ENCODE measurements at regions of chr6 and their contacts with region 1.

Region 1: GRCh38 chr6:158686791-158687381 is 37.0 kb downstream of the SYTL3 start:
- DNase-seq: no peak
- ATAC-seq: no peak
- H3K4me3 ChIP-seq: no peak overlapping the region
- H3K27ac ChIP-seq: peak overlapping the region; percentile 22; the same call in 1 of the 2 replicates
- H3K4me1 ChIP-seq: peaks cover 29% of the 10 kb centered on the region
- H3K27me3 ChIP-seq: no peaks in the 10 kb centered on the region
- CTCF ChIP-seq: no peak

Region 2: GRCh38 chr6:158213925-158214674 is 472.8 kb before region 1 on chr6:
- CTCF ChIA-PET with region 1: interaction called, 11 read pairs
- POLR2A ChIA-PET with region 1: no interaction called
- intact Hi-C with region 1: loop called (anchors 1 kb)
- DNase-seq: peak; percentile 76
- ATAC-seq: peak; percentile 99
- H3K4me3 ChIP-seq: no peak overlapping the region
- H3K27ac ChIP-seq: no peak overlapping the region
- H3K4me1 ChIP-seq: peaks cover 14% of the 10 kb centered on the region
- H3K27me3 ChIP-seq: no peaks in the 10 kb centered on the region
- CTCF ChIP-seq: peak; percentile 84

Region 3: DNA sequence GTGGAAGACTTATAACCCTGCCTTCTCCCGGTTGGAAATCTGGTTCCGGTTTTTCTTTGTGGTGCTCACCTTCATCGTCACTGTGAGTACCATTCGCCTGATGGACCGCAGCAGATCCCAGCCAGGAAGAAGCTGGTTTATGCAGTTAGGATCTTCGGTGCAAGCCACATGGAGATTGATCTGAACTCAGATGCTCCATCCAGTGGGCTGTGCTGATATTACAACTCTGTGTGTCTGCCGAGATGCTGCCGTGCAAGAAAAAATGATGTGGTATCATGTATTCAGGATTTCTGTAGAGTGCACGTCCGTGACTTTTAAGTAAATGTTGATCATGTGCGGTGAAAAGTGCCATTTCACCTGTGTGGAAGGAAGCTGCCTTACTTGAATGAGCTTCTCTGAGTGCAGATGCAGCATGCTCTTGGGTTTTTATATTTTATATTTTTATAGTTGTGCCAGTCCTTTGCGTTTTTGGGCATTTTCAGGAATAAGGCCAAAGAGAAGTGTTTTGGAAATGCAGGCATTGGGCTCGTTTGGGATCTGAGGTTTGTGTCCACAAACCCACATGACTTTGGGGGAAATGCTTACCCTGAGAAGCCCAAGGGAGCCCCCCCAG is 81.5 kb before region 1 on chr6:
- CTCF ChIA-PET with region 1: interaction called, 13 read pairs
- POLR2A ChIA-PET with region 1: no interaction called
- intact Hi-C with region 1: no loop called
- DNase-seq: peak; percentile 70
- ATAC-seq: peak; percentile 67
- H3K4me3 ChIP-seq: no peak overlapping the region
- H3K27ac ChIP-seq: no peak overlapping the region
- H3K4me1 ChIP-seq: no peaks in the 10 kb centered on the region
- H3K27me3 ChIP-seq: no peaks in the 10 kb centered on the region
- CTCF ChIP-seq: peak; percentile 71

Region 4: DNA sequence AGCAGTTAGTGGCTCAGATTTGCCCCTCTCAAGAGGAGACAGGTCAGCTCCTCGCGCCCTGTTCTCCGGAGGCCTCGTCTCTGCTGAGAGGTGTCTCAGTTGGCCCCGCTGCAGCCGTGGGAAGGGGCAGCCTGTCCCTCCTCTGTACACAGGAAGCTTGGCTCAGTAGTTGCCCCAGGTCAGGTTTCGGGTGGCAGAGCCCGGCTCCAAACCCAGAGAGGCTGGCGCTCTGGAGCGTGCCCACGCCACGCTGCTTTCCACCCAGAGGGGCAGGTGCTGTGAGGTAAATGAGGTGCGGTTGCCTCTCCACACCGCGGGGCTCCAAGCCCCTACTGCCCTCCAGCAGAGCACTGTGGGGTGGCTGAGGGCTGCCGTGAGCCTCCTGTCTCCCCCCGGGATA is 58.3 kb before region 1 on chr6:
- CTCF ChIA-PET with region 1: interaction called, 10 read pairs
- POLR2A ChIA-PET with region 1: no interaction called
- intact Hi-C with region 1: no loop called
- DNase-seq: no peak
- ATAC-seq: no peak
- H3K4me3 ChIP-seq: no peak overlapping the region
- H3K27ac ChIP-seq: no peak overlapping the region
- H3K4me1 ChIP-seq: peaks cover 10% of the 10 kb centered on the region; the same call in 1 of the 2 replicates
- H3K27me3 ChIP-seq: no peaks in the 10 kb centered on the region
- CTCF ChIP-seq: no peak

Region 5: GRCh38 chr6:158644231-158645063 is 42.4 kb before region 1 on chr6 and contains the start of gene DYNLT1:
- CTCF ChIA-PET with region 1: no interaction called
- POLR2A ChIA-PET with region 1: interaction called, 3 read pairs
- intact Hi-C with region 1: loop called (anchors 5 kb)
- DNase-seq: peak; percentile 88
- ATAC-seq: peak; percentile 63
- H3K4me3 ChIP-seq: peak within 1 kb of the TSS; percentile 96
- H3K27ac ChIP-seq: peak within 1 kb of the TSS; percentile 93
- H3K4me1 ChIP-seq: peaks cover 53% of the 10 kb centered on the region
- H3K27me3 ChIP-seq: no peaks in the 10 kb centered on the region
- CTCF ChIP-seq: no peak
- total RNA-seq, gene DYNLT1: 35.0 and 50.5 TPM in 2 replicates

Region 6: GRCh38 chr6:158660333-158660754 is 26.5 kb before region 1 on chr6:
- CTCF ChIA-PET with region 1: interaction called, 7 read pairs
- POLR2A ChIA-PET with region 1: no interaction called
- intact Hi-C with region 1: loop called (anchors 1 kb)
- DNase-seq: peak; percentile 68
- ATAC-seq: peak; percentile 48
- H3K4me3 ChIP-seq: no peak overlapping the region
- H3K27ac ChIP-seq: no peak overlapping the region
- H3K4me1 ChIP-seq: peaks cover 15% of the 10 kb centered on the region
- H3K27me3 ChIP-seq: no peaks in the 10 kb centered on the region
- CTCF ChIP-seq: peak; percentile 71

Measured in PC-3 (cell line).